ENCODE measurements at regions of chr7 and their contacts with region 1.

Region 1: GRCh38 chr7:155380221-155380861 is 77.6 kb upstream of the EN2 start:
- DNase-seq: peak; percentile 81
- ATAC-seq: peak; percentile 89
- H3K4me3 ChIP-seq: no peak overlapping the region
- H3K4me3 Mint-ChIP-seq: peak overlapping the region; percentile 44
- H3K27ac ChIP-seq: no peak overlapping the region
- H3K27ac Mint-ChIP-seq: no peak overlapping the region
- H3K4me1 ChIP-seq: peaks cover 50 to 64% of the 10 kb centered on the region in 2 donors
- H3K4me1 Mint-ChIP-seq: peaks cover 32% of the 10 kb centered on the region
- H3K27me3 ChIP-seq: peaks cover 0 to 85% (median 64%) of the 10 kb centered on the region in 4 experiments
- H3K27me3 Mint-ChIP-seq: peaks cover 78% of the 10 kb centered on the region
- CTCF ChIP-seq: peak; percentile 95

Region 2: GRCh38 chr7:155363852-155364562 is 16.3 kb before region 1 on chr7:
- CTCF ChIA-PET with region 1: interaction called, 11 read pairs
- POLR2A ChIA-PET with region 1: no interaction called
- intact Hi-C with region 1: no loop called
- DNase-seq: peak; percentile 36
- ATAC-seq: peak; percentile 39
- H3K4me3 ChIP-seq: no peak overlapping the region
- H3K4me3 Mint-ChIP-seq: no peak overlapping the region
- H3K27ac ChIP-seq: no peak overlapping the region
- H3K27ac Mint-ChIP-seq: no peak overlapping the region
- H3K4me1 ChIP-seq: peaks cover 45 to 54% of the 10 kb centered on the region in 2 donors
- H3K4me1 Mint-ChIP-seq: peaks cover 43% of the 10 kb centered on the region
- H3K27me3 ChIP-seq: peaks cover 0 to 20% (median 3%) of the 10 kb centered on the region in 4 experiments
- H3K27me3 Mint-ChIP-seq: peaks cover 25% of the 10 kb centered on the region
- CTCF ChIP-seq: no peak

Region 3: DNA sequence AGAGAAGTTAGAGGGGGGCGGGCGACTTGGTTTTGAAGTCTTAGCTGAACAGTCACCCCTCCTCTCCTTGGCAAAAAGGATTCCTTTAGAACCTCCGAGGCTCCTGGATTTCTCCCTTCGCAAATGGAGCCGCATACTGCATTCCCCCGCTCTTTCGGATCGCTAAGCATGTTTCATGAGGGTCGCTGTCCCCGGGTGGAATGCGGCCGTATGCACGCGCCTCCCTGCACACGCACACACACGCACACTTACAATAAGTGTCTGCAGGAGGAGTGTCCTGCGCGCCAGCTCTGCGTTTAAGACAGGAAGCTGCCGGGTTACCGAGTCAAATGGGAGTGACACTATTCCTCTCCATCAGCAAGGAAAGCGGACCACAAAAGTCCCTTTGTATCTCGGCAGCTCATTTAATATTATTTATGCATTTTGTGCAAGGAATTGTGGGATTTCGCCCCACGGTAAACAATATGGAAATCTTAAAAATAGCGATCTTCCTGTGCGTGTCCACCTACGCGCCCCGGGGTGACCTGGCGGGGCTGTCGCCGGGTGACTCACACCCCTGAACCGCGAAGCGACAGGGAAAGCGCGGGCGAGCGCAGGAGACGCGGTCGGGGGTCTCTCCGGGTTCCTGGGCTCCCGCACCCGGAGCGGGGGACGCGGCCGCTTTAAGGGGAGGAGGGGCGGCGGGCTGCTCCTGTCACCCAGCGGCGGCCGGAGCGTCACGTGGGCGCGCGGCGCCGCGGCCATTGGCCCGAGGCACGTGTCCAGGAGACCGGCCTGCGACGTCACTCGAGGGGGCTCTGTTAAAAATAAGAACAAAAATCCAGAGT is 76.6 kb after region 1 on chr7:
- CTCF ChIA-PET with region 1: interaction called, 4 read pairs
- POLR2A ChIA-PET with region 1: no interaction called
- intact Hi-C with region 1: loop called (anchors 2 kb)
- DNase-seq: peak; percentile 50
- ATAC-seq: peak; percentile 10
- H3K4me3 ChIP-seq: peak overlapping the region; percentile 1 to 54 (median 42)
- H3K4me3 Mint-ChIP-seq: peak overlapping the region; percentile 77
- H3K27ac ChIP-seq: no peak overlapping the region
- H3K27ac Mint-ChIP-seq: peak overlapping the region; percentile 37
- H3K4me1 ChIP-seq: peaks cover 27 to 51% of the 10 kb centered on the region in 2 donors
- H3K4me1 Mint-ChIP-seq: peaks cover 22% of the 10 kb centered on the region
- H3K27me3 ChIP-seq: peaks cover 0 to 85% (median 63%) of the 10 kb centered on the region in 4 experiments
- H3K27me3 Mint-ChIP-seq: peaks cover 59% of the 10 kb centered on the region
- CTCF ChIP-seq: no peak

Region 4: DNA sequence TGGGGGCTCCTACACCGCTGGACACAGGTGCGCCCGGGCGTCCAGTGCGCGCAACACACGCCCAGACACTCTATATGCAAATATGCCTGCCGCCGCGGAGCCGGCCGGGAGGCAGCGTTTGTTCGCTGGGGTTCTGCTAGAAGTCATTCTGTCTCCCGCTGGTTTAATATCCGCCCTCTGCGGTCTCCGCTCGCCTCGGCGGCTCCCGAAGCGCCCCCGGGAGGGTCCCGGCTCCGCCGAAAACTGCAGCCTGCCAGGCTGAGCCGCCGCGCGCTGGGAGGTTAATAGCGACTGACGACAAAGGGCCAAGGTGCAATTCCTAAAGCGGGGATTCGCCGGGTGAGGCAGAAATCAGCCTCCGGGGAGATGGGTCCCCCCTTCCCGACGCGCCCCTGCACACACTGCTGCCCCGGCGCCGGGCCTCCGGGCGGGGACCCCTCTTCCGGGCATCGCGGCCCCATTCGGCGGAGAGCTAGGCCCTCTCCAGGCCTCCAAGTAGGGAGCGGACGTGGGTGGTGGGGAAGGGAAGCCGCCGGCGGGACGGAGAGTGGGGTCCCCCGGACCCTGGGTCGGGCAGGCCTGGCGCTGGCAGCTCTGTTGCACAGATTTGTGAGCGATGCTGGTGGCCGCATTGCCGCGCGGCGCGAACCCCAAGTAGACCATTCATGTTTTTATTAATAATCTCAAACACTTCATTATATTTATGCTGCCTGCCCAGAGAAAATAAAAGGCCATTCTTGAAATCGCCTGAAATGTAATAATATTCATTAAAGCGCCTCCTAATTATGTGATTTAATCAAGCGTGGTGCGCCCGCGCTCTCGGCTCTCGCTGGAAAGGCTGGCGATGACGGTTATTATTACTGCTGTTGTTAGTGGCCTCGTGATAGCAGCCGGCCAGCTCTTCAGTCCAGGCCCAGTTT is 86.7 kb after region 1 on chr7:
- CTCF ChIA-PET with region 1: no interaction called
- POLR2A ChIA-PET with region 1: no interaction called
- intact Hi-C with region 1: loop called (anchors 5 kb)
- DNase-seq: peak; percentile 59
- ATAC-seq: no peak
- H3K4me3 ChIP-seq: peak overlapping the region in 3 of 5 experiments; percentile 9 to 45 (median 30)
- H3K4me3 Mint-ChIP-seq: peak overlapping the region; percentile 64
- H3K27ac ChIP-seq: no peak overlapping the region
- H3K27ac Mint-ChIP-seq: no peak overlapping the region
- H3K4me1 ChIP-seq: peaks cover 39 to 59% of the 10 kb centered on the region in 2 donors
- H3K4me1 Mint-ChIP-seq: peaks cover 21% of the 10 kb centered on the region
- H3K27me3 ChIP-seq: peaks cover 0 to 96% (median 85%) of the 10 kb centered on the region in 4 experiments
- H3K27me3 Mint-ChIP-seq: peaks cover 78% of the 10 kb centered on the region
- CTCF ChIP-seq: no peak

Region 5: GRCh38 chr7:155533827-155534690 is 153.7 kb after region 1 on chr7:
- CTCF ChIA-PET with region 1: interaction called, 11 read pairs
- POLR2A ChIA-PET with region 1: no interaction called
- intact Hi-C with region 1: loop called (anchors 1 kb)
- DNase-seq: peak; percentile 55
- ATAC-seq: peak; percentile 51
- H3K4me3 ChIP-seq: peak overlapping the region in 4 of 5 experiments; percentile 3 to 55 (median 35)
- H3K4me3 Mint-ChIP-seq: peak overlapping the region; percentile 70
- H3K27ac ChIP-seq: no peak overlapping the region
- H3K27ac Mint-ChIP-seq: no peak overlapping the region
- H3K4me1 ChIP-seq: peaks cover 13 to 18% of the 10 kb centered on the region in 2 donors
- H3K4me1 Mint-ChIP-seq: peaks cover 18% of the 10 kb centered on the region
- H3K27me3 ChIP-seq: peaks cover 0 to 67% (median 30%) of the 10 kb centered on the region in 4 experiments
- H3K27me3 Mint-ChIP-seq: peaks cover 70% of the 10 kb centered on the region
- CTCF ChIP-seq: peak; percentile 53